Activated T-helper 2 cell treated with anti-CD3 and anti-CD28 coated beads, Interferon-gamma antibody, Interleukin-2, Interleukin-4, amounts not matched to agents 10 μg/mL and 5 μg/mL and 100 μg/mL, durations not matched to agents 14 hours and 24 hours and 36 hours (primary cell): ENCODE measurements at regions of chr1 and their contacts with region 1.

Region 1: DNA sequence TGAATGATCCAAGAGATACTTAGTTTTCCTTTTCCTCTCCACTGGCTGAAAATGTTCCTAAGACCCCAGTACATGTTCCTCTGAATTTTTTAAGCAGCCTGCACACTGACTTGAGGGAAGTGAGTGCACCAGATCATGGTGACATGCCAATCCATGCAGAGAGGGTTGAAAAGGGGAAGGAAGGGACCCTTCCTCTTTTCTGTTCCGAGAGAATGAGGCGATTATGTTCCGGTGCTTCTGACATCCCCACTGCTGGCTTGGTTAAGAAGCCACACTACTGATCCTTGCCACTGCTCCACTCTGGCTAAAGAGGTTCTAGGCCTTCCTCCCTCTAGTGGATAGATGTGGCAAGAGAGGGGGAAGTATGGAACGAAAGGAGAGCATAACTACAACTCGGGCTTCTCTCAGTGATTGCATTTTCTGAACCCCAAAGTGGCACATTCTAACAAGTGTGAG is 1.8 kb upstream of the CYB5R1 start:
- DNase-seq: peak; percentile 26
- H3K4me3 Mint-ChIP-seq: peak overlapping the region; percentile 41
- H3K27ac Mint-ChIP-seq: no peak overlapping the region
- H3K4me1 Mint-ChIP-seq: peaks cover 20% of the 10 kb centered on the region
- H3K27me3 Mint-ChIP-seq: peaks cover 14% of the 10 kb centered on the region

Region 2: DNA sequence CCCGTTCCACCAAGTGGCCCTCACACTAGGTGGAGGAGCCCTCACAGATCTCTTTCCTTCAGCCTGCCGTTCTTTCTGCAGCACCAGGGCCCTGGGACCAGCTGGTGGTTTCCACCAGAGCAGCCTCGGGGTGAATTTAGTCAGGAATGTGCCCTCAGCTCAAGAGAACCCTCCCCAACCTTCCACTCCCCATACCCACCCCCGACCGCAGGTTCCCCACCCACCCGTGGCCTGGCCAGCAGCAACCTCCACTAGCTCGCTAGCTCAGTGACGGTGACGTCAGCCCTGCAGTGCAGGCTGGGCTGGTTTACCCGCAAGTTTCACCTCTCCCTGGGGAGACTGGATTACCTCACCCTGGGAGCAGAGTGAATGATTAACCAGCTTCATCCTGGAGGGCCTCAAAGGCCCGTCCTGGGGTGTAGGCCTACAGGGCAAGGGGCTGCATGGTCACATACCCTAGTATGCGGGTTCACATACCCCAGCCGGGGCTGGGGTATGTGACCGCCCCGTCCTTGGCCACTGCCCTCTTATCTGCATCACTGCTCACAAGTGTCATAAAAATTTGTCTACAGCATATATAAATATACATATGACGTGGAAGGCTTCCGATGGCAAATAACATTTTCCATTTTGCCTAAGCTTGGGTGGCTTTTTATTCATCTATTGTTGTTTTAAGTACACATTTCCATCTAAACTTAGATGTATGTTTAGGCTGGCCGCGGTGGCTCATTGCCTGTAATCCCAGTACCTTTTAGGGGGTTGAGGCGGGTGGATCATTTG is 934.0 kb before region 1 on chr1:
- intact Hi-C with region 1: no loop called
- DNase-seq: no peak
- H3K4me3 Mint-ChIP-seq: no peak overlapping the region
- H3K27ac Mint-ChIP-seq: no peak overlapping the region
- H3K4me1 Mint-ChIP-seq: no peaks in the 10 kb centered on the region
- H3K27me3 Mint-ChIP-seq: peaks cover 3% of the 10 kb centered on the region

Region 3: GRCh38 chr1:202589190-202590030 is 379.5 kb before region 1 on chr1:
- intact Hi-C with region 1: no loop called
- DNase-seq: no peak
- H3K4me3 Mint-ChIP-seq: no peak overlapping the region
- H3K27ac Mint-ChIP-seq: no peak overlapping the region
- H3K4me1 Mint-ChIP-seq: peaks cover 3% of the 10 kb centered on the region
- H3K27me3 Mint-ChIP-seq: no peaks in the 10 kb centered on the region

Region 4: DNA sequence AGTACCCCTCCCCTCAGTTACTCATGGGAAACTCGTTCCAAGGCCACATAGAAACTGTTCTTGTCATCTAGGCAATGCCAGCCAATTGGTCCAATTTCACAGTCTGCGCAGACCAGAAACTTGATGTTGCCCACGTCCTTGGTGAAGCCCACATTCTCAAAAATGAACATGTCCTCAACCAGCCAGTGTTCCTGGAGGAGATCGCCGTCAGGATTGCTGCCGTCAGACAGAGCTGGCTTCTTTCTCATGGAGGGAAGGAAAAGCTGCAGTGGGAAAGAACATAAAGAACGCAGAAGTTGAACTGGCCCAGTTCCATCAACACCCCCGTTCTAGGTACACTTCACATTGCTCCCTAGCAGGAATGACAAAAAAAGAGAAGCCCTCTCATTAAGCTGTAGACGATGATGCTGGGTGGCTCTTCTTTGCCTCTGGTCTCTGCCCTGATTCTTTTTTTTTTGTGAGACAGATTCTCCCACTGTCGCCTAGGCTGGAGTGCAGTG is 87.9 kb before region 1 on chr1:
- intact Hi-C with region 1: no loop called
- DNase-seq: no peak
- H3K4me3 Mint-ChIP-seq: no peak overlapping the region
- H3K27ac Mint-ChIP-seq: no peak overlapping the region
- H3K4me1 Mint-ChIP-seq: peaks cover 3% of the 10 kb centered on the region
- H3K27me3 Mint-ChIP-seq: no peaks in the 10 kb centered on the region

Region 5: GRCh38 chr1:202957733-202958543 is 10.9 kb before region 1 on chr1 and contains the start of gene ADIPOR1:
- intact Hi-C with region 1: loop called (anchors 1 kb)
- DNase-seq: peak; percentile 92
- H3K4me3 Mint-ChIP-seq: peak within 1 kb of the TSS; percentile 94
- H3K27ac Mint-ChIP-seq: peak within 1 kb of the TSS; percentile 58
- H3K4me1 Mint-ChIP-seq: peaks cover 29% of the 10 kb centered on the region
- H3K27me3 Mint-ChIP-seq: no peaks in the 10 kb centered on the region
- total RNA-seq, gene ADIPOR1: 79.1 and 79.2 TPM in 2 replicates

Region 6: GRCh38 chr1:202998836-202999750 is 30.2 kb after region 1 on chr1:
- intact Hi-C with region 1: loop called (anchors 2 kb)
- DNase-seq: peak; percentile 32
- H3K4me3 Mint-ChIP-seq: peak overlapping the region; percentile 33
- H3K27ac Mint-ChIP-seq: no peak overlapping the region
- H3K4me1 Mint-ChIP-seq: peaks cover 15% of the 10 kb centered on the region
- H3K27me3 Mint-ChIP-seq: peaks cover 36% of the 10 kb centered on the region

Region 7: DNA sequence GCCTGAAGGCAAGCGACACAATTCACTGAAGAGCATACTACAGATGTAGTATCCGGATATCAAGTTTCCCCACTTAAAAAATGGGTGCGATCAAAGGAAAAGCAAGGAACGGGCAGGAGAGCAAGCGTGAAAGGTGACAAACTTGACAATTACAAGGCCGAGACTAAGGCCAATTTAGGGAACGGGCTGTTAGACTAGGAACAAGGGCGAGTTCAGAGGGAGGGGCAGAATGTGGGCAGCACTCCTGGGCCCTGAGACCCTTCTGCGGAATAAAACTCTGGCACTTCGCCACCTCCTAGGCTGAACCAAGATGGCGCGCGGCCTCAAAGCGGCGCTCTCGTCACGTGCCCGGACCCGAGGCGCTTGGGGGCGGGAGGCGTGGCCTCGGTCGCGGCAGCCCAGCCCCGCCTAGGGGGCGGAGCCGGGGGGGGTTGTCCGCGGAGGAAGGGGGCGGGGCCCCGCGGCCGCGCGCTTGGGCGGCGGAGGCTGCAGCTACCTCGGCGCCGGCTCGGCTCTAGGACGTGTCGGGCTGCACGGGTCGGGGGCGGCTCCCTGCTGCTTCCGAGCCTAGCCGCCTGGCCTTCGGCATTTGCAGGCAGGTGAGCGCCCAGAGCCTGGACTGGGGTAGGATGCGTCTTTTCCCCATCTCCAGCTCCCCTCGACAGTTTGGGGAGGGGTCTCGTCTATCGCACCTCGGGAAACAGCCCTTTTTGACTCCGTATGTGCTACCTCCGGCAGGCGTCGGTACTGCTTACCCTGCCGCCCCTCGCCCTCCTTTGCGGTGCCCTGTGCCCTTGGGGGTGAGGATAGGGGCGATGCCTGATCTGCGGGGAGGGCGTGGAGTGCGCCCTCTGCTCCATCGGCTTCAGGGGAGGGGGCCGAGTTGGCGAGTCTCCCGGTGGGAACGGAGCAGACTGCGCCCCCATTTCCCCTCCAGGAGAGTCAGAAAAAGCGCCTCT is 57.4 kb after region 1 on chr1 and contains the start of gene PPFIA4:
- intact Hi-C with region 1: no loop called
- DNase-seq: peak; percentile 87
- H3K4me3 Mint-ChIP-seq: peak within 1 kb of the TSS; percentile 82
- H3K27ac Mint-ChIP-seq: peak within 1 kb of the TSS; percentile 72
- H3K4me1 Mint-ChIP-seq: peaks cover 22% of the 10 kb centered on the region
- H3K27me3 Mint-ChIP-seq: no peaks in the 10 kb centered on the region
- total RNA-seq, gene PPFIA4: 33.4 and 35.1 TPM in 2 replicates